Activated CD4-positive, alpha-beta T cell treated with anti-CD3 and anti-CD28 coated beads, Interleukin-2, amount 10 ng/mL, durations not matched to agents 7 days and 5 days (primary cell): ENCODE measurements at regions of chr6 and their contacts with region 1.

Region 1: GRCh38 chr6:75601304-75602245 is at the start of gene SENP6:
- DNase-seq: peak; percentile 66
- H3K4me3 Mint-ChIP-seq: peak within 1 kb of the TSS; percentile 94
- H3K27ac Mint-ChIP-seq: peak within 1 kb of the TSS; percentile 92
- H3K4me1 Mint-ChIP-seq: peaks cover 51% of the 10 kb centered on the region
- H3K27me3 Mint-ChIP-seq: no peaks in the 10 kb centered on the region
- total RNA-seq, gene SENP6: 70.9 to 78.5 TPM

Region 2: GRCh38 chr6:75666590-75666989 is 65.0 kb after region 1 on chr6:
- CTCF ChIA-PET with region 1: no interaction called
- POLR2A ChIA-PET with region 1: interaction called, 10 read pairs
- DNase-seq: no peak
- H3K4me3 Mint-ChIP-seq: no peak overlapping the region
- H3K27ac Mint-ChIP-seq: no peak overlapping the region
- H3K4me1 Mint-ChIP-seq: no peaks in the 10 kb centered on the region
- H3K27me3 Mint-ChIP-seq: no peaks in the 10 kb centered on the region